CD8-positive, alpha-beta memory T cell (primary cell): ENCODE measurements at regions of chr4 and their contacts with region 1.

Region 1: DNA sequence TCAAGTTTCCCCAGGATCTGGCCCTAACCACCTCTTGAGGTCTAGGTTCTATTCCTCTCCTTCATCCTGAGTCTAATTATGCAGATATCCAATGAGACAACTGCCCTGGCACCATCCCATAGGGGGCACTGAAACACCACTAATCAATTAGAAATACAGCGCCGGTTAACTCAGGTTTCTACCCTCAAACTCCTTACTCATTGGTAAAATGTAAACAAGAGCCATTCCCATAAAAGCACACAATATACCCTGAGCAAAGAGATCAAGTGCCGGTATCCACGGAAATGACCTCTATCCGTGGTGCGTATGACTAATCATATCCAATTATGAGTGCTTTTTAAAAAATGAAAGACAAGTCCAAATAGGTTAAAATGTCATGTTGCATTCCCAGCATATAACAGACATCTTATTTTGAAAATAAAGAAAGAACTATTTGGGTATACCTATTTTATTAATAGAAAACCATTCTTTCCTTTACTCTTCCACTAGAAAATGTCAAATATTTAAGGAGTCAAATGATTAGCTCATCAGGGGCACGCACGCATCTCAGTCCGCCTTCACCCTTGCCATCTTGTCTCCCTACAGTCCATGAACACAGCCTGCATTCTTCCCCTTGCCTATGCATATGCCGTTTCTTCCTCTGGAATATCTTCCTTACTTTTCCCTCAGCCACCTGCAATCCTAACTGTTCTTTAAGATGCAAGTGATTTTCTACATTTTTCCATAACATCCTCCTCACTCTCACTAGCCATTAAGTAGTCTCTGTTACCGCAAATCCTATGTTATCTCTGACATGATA is 141.1 kb downstream of the MAML3 start:
- DNase-seq: peak in 4 of 5 donors; percentile 21 to 69 (median 47)
- H3K4me3 ChIP-seq: no peak overlapping the region
- H3K4me3 Mint-ChIP-seq: no peak overlapping the region
- H3K27ac ChIP-seq: no peak overlapping the region
- H3K27ac Mint-ChIP-seq: no peak overlapping the region
- H3K4me1 ChIP-seq: no peaks in the 10 kb centered on the region
- H3K4me1 Mint-ChIP-seq: peaks cover 0 to 5% (median 0%) of the 10 kb centered on the region in 3 donors
- H3K27me3 ChIP-seq: no peaks in the 10 kb centered on the region
- H3K27me3 Mint-ChIP-seq: peaks cover 6 to 16% of the 10 kb centered on the region in 2 donors

Region 2: DNA sequence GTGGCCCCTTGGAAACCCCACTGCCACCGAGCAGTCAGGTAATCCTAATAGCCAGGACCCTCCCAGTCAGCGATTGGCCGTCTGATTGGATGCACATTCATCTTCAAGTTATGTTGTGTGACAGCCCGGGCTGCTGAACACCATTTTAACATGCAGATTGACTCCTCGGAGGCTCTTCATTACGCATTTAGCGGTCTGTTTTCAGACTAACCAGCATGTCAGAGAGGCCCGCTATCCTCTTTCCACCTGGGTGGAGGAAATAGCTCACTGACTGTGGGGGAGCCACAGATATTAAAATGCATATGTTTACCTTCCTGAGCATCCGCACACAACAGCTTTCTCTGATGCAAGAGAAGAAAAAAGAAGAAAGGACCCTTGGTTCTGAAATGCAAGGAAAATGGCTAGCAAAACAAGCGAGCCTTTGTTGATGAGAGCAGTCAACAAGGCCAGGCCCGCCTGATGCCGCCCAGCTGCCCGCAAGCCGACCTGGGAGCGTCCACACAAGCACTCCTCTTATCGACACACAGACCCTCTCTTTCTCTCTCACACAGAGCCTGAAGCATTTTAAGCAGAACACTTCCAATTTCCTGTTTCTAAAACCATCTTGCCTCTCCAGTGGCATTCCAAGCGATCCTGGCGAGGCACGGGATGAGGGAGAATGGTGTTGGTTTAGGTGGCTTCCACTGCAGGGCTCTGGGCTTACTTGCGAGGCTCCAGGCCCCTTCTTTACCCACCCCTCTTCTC is 229.0 kb before region 1 on chr4:
- CTCF ChIA-PET with region 1: no interaction called
- POLR2A ChIA-PET with region 1: no interaction called
- DNase-seq: no peak
- H3K4me3 ChIP-seq: no peak overlapping the region
- H3K4me3 Mint-ChIP-seq: no peak overlapping the region
- H3K27ac ChIP-seq: no peak overlapping the region
- H3K27ac Mint-ChIP-seq: no peak overlapping the region
- H3K4me1 ChIP-seq: no peaks in the 10 kb centered on the region
- H3K4me1 Mint-ChIP-seq: no peaks in the 10 kb centered on the region
- H3K27me3 ChIP-seq: no peaks in the 10 kb centered on the region
- H3K27me3 Mint-ChIP-seq: peaks cover 0 to 7% of the 10 kb centered on the region in 2 donors

Region 3: GRCh38 chr4:140000232-140000631 is 12.7 kb before region 1 on chr4:
- CTCF ChIA-PET with region 1: no interaction called
- POLR2A ChIA-PET with region 1: no interaction called
- DNase-seq: no peak
- H3K4me3 ChIP-seq: no peak overlapping the region
- H3K4me3 Mint-ChIP-seq: no peak overlapping the region
- H3K27ac ChIP-seq: no peak overlapping the region
- H3K27ac Mint-ChIP-seq: no peak overlapping the region
- H3K4me1 ChIP-seq: no peaks in the 10 kb centered on the region
- H3K4me1 Mint-ChIP-seq: no peaks in the 10 kb centered on the region
- H3K27me3 ChIP-seq: no peaks in the 10 kb centered on the region
- H3K27me3 Mint-ChIP-seq: peaks cover 14 to 29% of the 10 kb centered on the region in 2 donors

Region 4: DNA sequence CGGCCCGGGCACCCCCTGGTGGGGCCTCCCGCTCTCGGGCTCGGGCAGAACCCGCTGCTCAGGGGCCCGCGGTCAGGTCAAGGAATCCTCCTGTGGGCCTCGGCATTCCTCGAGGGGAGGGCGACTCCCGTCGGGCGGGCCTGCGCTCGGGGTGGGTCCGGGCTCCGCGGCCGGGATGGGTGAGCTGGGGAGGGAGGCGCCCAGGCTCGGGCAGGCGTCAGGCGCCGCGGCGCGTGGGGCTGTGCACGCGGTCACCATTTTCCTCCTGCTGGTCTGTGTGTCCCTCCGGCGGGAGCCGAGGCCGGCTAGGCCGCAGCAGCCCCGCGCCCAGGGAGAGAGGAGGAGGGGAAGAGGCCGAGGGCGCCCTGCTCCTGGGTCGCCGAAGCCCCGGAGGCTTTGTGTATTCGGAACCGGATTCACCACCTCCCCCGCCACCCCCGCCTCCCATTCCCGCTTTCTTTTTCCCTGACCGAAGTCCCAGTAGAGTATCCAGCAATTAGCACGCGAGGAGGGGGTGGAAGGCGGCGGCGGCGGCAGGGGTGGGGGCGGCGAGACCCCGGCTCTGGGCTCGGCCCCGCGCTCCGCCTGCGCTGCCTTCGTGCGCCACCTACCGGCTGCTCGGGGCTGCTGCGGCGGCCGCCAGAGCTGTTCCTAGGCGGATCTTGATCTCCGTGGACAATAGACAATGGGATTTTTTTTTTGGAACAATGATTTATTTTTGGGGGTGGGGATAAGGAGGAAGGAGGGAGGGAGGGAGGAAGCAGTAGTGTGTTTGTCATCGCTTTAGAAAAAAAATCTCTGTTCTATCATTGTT is 240.1 kb after region 1 on chr4:
- CTCF ChIA-PET with region 1: interaction called, 54 read pairs
- POLR2A ChIA-PET with region 1: no interaction called
- DNase-seq: peak; percentile 37 to 61 (median 48)
- H3K4me3 ChIP-seq: peak overlapping the region; percentile 37
- H3K4me3 Mint-ChIP-seq: peak overlapping the region; percentile 49 to 82 (median 75)
- H3K27ac ChIP-seq: no peak overlapping the region
- H3K27ac Mint-ChIP-seq: no peak overlapping the region
- H3K4me1 ChIP-seq: no peaks in the 10 kb centered on the region
- H3K4me1 Mint-ChIP-seq: peaks cover 7 to 9% (median 9%) of the 10 kb centered on the region in 3 donors
- H3K27me3 ChIP-seq: peaks cover 19% of the 10 kb centered on the region
- H3K27me3 Mint-ChIP-seq: peaks cover 28 to 46% of the 10 kb centered on the region in 2 donors